ENCODE measurements at regions of chr7 and their contacts with region 1.

Region 1: GRCh38 chr7:150962553-150963399 is 15.3 kb downstream of the KCNH2 start:
- DNase-seq: peak in 1 of 2 experiments; percentile 61
- H3K4me3 ChIP-seq: no peak overlapping the region
- H3K27ac ChIP-seq: no peak overlapping the region
- H3K4me1 ChIP-seq: no peaks in the 10 kb centered on the region
- H3K27me3 ChIP-seq: peaks cover 45% of the 10 kb centered on the region
- CTCF ChIP-seq: peak; percentile 97

Region 2: DNA sequence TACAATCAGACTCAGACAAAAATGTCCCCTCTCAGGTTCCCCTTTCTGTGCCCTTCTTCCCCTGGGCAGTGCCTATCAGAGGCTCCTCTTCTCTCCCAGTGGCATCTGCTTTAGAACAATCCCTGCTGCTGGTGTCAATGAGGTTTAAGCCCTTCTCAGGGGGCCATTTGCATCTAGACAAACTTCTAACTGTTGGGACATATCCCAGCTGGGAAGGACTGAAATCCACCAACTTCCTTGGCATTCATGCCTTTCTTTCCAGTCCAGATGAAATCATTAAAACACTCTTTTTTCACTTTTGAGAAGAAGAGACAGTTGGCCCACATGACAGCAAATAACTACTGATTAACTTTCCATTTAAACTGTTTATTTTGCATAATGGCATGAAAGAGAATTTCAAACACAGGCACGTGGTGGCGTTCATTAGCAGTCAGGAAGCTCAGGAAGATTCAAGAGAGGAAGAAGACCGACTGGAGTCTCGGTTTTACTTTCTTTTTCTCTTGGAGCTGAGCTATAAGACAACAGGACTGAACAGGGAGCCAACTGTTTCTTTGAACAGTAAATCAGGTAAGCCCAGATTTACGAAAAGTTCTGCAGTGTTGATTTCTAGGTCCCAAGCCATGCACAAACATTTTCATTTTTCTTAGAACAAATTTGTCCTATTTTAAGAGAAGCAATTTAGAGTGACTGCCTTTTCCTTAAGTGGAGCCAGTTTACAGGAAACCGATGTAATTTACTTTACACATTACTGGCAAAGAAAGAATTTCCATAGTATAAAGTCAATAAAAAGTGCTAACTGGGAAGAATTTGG is 277.4 kb before region 1 on chr7 and contains the start of gene GIMAP2:
- CTCF ChIA-PET with region 1: no interaction called
- POLR2A ChIA-PET with region 1: no interaction called
- intact Hi-C with region 1: no loop called
- DNase-seq: no peak
- H3K4me3 ChIP-seq: peak within 1 kb of the TSS; percentile 46
- H3K27ac ChIP-seq: no peak within 1 kb of the TSS
- H3K4me1 ChIP-seq: no peaks in the 10 kb centered on the region
- H3K27me3 ChIP-seq: peaks cover 32% of the 10 kb centered on the region; the same call in 1 of the 2 replicates
- CTCF ChIP-seq: no peak
- total RNA-seq, gene GIMAP2: 0.55 and 0.81 TPM in 2 replicates

Region 3: DNA sequence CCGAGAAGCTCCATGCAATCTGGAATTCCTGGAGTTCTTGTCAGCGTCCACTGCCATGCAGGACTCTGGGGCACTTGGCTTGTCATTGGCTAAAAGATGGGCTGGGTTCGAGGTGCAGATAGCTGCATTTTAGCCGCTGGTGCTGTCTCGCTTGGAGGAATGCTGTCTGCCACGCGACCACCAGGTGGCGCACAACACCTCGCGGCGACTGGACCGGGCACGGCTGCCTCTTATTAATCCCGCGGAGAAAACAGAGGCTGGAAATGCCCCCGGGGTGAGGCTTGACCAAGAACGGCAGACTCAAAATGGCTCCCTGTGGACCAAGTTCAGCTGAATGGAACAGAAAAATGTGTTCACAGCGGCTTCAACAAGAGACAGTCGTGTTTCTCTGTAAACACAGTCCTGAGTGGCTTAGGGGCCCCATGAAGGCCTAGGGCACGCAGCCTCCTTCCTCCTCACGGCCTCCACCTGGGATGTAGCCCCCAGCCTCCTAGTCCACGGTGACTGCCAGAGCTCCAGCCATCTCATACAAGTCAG is 64.2 kb before region 1 on chr7:
- CTCF ChIA-PET with region 1: interaction called, 4 read pairs
- POLR2A ChIA-PET with region 1: no interaction called
- intact Hi-C with region 1: loop called (anchors 1 kb)
- DNase-seq: peak in 1 of 2 experiments; percentile 82
- H3K4me3 ChIP-seq: no peak overlapping the region
- H3K27ac ChIP-seq: no peak overlapping the region
- H3K4me1 ChIP-seq: no peaks in the 10 kb centered on the region
- H3K27me3 ChIP-seq: peaks cover 29% of the 10 kb centered on the region
- CTCF ChIP-seq: peak; percentile 95

Region 4: GRCh38 chr7:150903606-150904005 is 59.2 kb before region 1 on chr7:
- CTCF ChIA-PET with region 1: interaction called, 11 read pairs
- POLR2A ChIA-PET with region 1: no interaction called
- intact Hi-C with region 1: loop called (anchors 1 kb)
- DNase-seq: peak; percentile 64 to 93
- H3K4me3 ChIP-seq: no peak overlapping the region
- H3K27ac ChIP-seq: no peak overlapping the region
- H3K4me1 ChIP-seq: no peaks in the 10 kb centered on the region
- H3K27me3 ChIP-seq: peaks cover 52% of the 10 kb centered on the region
- CTCF ChIP-seq: no peak

Region 5: GRCh38 chr7:151019130-151019447 is 56.3 kb after region 1 on chr7:
- CTCF ChIA-PET with region 1: interaction called, 7 read pairs
- POLR2A ChIA-PET with region 1: interaction called, 15 read pairs
- intact Hi-C with region 1: no loop called
- DNase-seq: no peak
- H3K4me3 ChIP-seq: no peak overlapping the region
- H3K27ac ChIP-seq: no peak overlapping the region
- H3K4me1 ChIP-seq: peaks cover 7% of the 10 kb centered on the region
- H3K27me3 ChIP-seq: no peaks in the 10 kb centered on the region
- CTCF ChIP-seq: no peak

Measured in PC-9 (cell line).